ENCODE measurements at regions of chr16 and their contacts with region 1.

Region 1: GRCh38 chr16:10509534-10510025 is 70.8 kb downstream of the EMP2 start:
- DNase-seq: peak in 1 of 2 donors; percentile 31
- H3K4me3 ChIP-seq: no peak overlapping the region
- H3K27ac ChIP-seq: no peak overlapping the region
- H3K4me1 ChIP-seq: no peaks in the 10 kb centered on the region
- H3K27me3 ChIP-seq: no peaks in the 10 kb centered on the region
- CTCF ChIP-seq: peak in 2 of 3 donors; percentile 79 to 80
- POLR2A ChIP-seq: no peak

Region 2: DNA sequence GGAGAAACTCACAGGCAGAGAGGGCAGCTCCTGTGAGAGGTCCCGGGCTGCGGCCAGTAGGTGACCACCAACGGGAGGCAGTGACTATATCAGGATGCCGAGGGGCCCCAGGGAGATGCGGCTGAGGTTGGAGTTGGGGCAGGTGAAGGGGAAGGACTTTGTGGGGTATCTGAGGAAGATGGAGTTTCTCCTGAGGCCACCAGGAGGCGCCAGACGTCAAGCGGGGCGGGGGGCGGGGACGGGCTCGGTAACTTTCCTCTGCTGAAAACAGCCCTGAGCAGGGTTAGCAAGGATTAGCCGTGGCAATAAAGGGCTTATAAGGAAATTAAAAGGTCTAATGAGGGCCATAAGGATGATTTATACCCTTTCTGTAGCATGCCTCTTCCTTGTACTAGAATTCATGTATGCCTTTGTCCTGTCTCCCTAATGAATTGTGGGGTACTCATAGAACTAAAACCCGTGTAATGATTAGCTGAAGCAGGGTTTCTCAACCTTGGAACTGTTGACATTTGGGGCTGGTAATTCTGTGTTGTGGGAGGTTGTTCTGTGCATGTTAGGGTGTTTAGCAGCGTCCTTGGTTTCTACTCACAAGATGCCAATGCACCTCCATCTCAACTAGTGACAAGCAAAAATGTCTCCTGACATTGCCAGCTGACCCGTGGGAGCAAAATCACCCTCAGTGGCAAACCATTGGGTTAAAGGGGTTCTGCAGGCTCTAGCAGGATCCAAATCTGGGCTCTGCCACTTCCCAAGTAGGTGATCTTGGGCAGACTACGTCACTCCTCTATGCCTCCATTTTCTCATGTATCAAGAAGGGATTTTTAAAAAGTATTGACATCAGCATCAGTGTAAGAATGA is 252.6 kb before region 1 on chr16:
- intact Hi-C with region 1: loop called (anchors 5 kb)
- DNase-seq: peak in 1 of 2 donors; percentile 55
- H3K4me3 ChIP-seq: no peak overlapping the region
- H3K27ac ChIP-seq: no peak overlapping the region
- H3K4me1 ChIP-seq: no peaks in the 10 kb centered on the region
- H3K27me3 ChIP-seq: peaks cover 0 to 14% of the 10 kb centered on the region in 2 donors
- CTCF ChIP-seq: peak; percentile 40 to 72 (median 62)
- POLR2A ChIP-seq: no peak

Region 3: GRCh38 chr16:10497132-10498101 is 12.2 kb before region 1 on chr16:
- intact Hi-C with region 1: no loop called
- DNase-seq: no peak
- H3K4me3 ChIP-seq: no peak overlapping the region
- H3K27ac ChIP-seq: no peak overlapping the region
- H3K4me1 ChIP-seq: no peaks in the 10 kb centered on the region
- H3K27me3 ChIP-seq: no peaks in the 10 kb centered on the region
- CTCF ChIP-seq: no peak
- POLR2A ChIP-seq: no peak

Region 4: DNA sequence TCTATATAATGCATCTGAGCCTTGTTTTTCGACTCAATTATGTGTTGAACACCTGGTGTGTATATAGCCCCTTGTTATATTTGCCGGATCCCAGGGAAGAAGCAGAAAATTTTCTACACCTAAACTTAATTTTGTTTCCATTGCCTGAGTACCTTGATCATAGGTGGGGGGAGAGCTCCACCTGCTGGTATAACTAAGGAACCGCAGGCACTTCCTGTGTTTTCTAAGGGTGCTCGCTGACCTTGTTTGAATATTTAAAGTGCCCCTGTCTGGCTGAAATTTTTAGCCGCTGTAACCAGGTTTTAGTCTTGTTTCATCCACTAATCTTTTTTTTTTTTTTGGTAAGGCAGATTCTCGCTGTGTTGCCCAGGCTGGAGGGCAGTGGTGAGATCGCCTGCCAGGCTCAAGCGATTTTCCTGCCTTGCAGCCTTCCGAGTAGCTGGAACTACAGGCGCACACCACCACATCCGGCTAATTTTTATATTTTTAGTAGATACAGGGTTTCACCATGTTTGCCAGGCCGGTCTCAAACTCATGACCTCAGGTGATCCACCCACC is 227.6 kb after region 1 on chr16:
- intact Hi-C with region 1: loop called (anchors 5 kb)
- DNase-seq: peak in 1 of 2 donors; percentile 53
- H3K4me3 ChIP-seq: no peak overlapping the region
- H3K27ac ChIP-seq: peak overlapping the region in 1 of 2 donors; percentile 65
- H3K4me1 ChIP-seq: no peaks in the 10 kb centered on the region
- H3K27me3 ChIP-seq: no peaks in the 10 kb centered on the region
- CTCF ChIP-seq: peak; percentile 92 to 96 (median 95)
- POLR2A ChIP-seq: no peak

Measured in breast epithelium (tissue), 4 donors.